Activated T-helper 1 cell treated with anti-CD3 and anti-CD28 coated beads, Interleukin-12 subunit alpha, Interleukin-12 subunit beta, Interleukin-2, Interleukin-4 antibody, amounts not matched to agents 30 ng/mL and 10 ng/mL and 1 ng/mL, durations not matched to agents 14 hours and 24 hours and 36 hours (primary cell): ENCODE measurements at regions of chr2 and their contacts with region 1.

Region 1: DNA sequence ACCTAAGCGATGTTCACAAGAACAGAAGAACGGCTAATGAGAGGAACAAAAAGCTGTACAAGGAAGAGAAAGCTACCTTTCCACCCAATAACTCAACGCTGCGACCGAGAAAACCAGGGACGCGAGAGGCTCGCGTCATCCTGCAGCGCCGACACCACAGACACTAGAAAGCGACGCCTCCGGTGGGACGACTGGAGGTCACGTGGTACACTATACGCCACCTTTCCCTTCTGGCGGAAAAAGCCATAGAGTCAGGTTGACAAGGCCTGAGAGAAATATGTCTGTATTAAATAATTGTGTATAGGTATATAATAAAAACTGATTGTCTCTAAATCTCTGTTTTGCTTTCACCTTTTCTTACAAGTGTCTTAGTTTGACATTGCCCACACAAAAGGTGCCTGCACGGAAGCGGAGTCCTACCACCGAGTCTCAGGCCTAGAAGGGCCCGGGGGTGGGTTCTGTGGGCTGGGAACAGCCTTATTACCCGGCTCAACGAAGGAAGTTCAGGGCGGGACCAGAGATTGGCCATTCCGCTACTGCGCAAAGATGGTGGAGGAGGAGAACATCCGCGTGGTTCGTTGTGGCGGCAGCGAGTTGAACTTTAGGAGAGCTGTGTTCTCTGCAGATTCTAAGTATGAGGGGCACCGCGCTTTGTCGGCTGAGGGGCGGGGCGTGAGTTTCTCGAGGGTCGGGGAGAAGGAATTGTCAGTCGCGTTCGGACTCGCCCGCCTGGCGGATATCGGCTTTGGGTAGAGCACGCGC is at the start of gene WDR75:
- DNase-seq: peak; percentile 89
- H3K4me3 Mint-ChIP-seq: no peak within 1 kb of the TSS
- H3K27ac Mint-ChIP-seq: peak within 1 kb of the TSS; percentile 99
- H3K4me1 Mint-ChIP-seq: peaks cover 8% of the 10 kb centered on the region
- H3K27me3 Mint-ChIP-seq: peaks cover 3% of the 10 kb centered on the region
- total RNA-seq, gene WDR75: 108 and 112 TPM in 2 replicates

Region 2: GRCh38 chr2:187581125-187581896 is 1859.8 kb before region 1 on chr2:
- intact Hi-C with region 1: loop called (anchors 10 kb)
- DNase-seq: peak; percentile 5
- H3K4me3 Mint-ChIP-seq: no peak overlapping the region
- H3K27ac Mint-ChIP-seq: no peak overlapping the region
- H3K4me1 Mint-ChIP-seq: peaks cover 13% of the 10 kb centered on the region
- H3K27me3 Mint-ChIP-seq: peaks cover 2% of the 10 kb centered on the region

Region 3: DNA sequence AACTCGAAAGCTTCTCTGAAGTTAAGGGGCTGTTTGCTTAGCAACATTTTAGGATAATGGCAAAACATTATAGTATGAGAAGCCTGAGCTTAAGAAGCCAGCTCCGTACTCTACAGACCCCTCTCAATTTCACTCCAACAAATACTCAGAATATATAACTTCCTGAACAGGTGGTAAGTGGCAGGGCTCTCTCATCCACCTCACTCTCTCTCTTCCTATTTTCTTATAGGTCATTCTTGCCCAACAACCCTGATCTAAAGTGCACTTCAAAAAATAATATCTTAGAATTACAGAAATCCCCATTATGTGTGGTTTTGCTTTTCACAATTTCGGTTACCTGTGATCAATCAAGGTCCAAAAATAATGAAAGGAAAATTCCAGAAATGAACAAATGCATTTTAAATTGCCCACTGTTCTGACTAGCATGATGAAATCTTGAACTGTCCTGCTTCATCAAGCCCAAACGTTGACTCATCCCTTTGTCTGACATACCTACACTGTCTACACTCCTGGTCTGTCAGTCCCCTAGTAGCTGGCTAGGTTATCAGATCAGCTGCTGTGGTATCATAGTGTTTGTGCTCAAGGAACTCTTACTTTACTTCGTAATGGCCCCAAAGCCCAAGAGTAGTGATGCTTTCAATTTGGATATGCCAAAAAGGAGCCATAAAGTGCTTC is 138.7 kb before region 1 on chr2:
- intact Hi-C with region 1: loop called (anchors 5 kb)
- DNase-seq: no peak
- H3K4me3 Mint-ChIP-seq: no peak overlapping the region
- H3K27ac Mint-ChIP-seq: no peak overlapping the region
- H3K4me1 Mint-ChIP-seq: peaks cover 62% of the 10 kb centered on the region
- H3K27me3 Mint-ChIP-seq: no peaks in the 10 kb centered on the region

Region 4: DNA sequence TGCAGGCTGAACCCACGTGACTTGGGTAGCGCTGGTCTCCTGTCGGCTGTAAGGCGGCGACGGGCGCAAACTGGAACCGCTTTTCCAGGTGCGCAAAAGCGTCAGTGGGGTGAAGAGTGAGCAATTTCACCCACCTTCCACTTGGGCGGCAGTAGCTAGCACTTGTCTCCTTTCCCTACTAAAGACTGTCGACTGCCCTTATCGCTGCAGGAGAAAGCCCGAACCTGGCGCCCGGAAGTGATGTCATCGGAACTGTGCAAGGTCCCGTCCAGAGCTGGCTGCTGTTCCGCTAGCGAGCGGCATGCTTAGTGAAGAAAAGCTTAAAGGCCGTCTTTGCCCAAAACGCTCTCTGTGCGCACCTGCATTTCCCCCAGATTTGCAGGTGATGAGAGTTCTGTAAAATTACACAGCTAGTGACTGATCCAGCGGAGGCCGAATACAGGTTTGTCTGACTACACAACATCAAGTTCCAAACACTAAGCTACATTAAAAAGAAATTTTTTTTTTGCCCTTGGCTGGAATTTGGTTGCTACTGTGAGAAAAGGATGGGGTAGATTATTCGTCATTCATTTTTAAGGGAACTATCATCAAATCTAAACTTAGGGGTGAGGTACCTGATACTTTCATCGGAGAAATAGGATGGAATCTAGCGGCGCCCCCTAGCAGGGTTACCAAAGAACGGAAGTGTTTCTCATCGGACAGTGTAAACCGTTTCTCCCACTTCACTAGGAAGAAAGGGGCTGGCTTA is 321.6 kb after region 1 on chr2 and contains the start of gene OSGEPL1:
- intact Hi-C with region 1: loop called (anchors 1 kb)
- DNase-seq: peak; percentile 88
- H3K4me3 Mint-ChIP-seq: peak within 1 kb of the TSS; percentile 92
- H3K27ac Mint-ChIP-seq: peak within 1 kb of the TSS; percentile 99
- H3K4me1 Mint-ChIP-seq: peaks cover 14% of the 10 kb centered on the region
- H3K27me3 Mint-ChIP-seq: no peaks in the 10 kb centered on the region
- total RNA-seq, gene OSGEPL1: 8.3 and 11.4 TPM in 2 replicates

Region 5: DNA sequence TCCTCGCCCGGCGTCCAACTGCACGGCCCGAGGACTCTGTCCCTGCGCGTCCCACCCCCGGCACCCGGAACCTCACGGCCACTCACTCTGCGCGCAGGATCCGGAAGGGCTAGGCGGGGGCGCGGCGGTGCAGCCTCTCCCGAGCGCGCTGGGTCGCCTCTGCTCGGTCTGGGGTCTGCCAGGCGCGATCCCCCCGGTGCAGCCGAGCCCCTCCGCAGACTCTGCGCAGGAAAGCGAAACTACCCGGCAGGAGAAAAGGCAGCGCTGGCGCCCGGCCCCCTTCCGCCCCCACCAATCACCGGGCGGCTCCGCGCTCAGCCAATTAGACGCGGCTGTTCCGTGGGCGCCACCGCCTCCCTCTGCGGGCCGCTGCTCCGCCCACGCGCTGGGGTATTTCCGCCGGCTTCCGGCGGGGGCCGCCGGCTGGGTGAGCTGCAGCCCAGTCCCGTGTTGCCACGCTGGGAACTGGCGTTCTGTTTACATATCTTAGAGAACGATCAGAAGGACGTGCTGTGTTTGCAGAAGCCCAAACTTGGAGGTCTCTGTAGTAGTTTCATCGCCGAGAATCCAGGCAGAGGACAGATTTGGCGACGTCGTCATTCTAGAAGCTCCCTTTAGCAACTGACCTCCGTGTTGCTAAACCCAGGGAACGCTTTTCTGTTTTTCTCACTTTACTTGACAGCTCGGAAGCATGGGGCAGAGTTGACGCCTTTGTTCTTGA is 1573.0 kb after region 1 on chr2 and contains the start of gene STAT1:
- intact Hi-C with region 1: loop called (anchors 5 kb)
- DNase-seq: peak; percentile 97
- H3K4me3 Mint-ChIP-seq: no peak within 1 kb of the TSS
- H3K27ac Mint-ChIP-seq: no peak within 1 kb of the TSS
- H3K4me1 Mint-ChIP-seq: peaks cover 49% of the 10 kb centered on the region
- H3K27me3 Mint-ChIP-seq: no peaks in the 10 kb centered on the region
- total RNA-seq, gene STAT1: 129 and 136 TPM in 2 replicates